GM23248 (cell line): ENCODE measurements at regions of chr2 and their contacts with region 1.

Region 1: DNA sequence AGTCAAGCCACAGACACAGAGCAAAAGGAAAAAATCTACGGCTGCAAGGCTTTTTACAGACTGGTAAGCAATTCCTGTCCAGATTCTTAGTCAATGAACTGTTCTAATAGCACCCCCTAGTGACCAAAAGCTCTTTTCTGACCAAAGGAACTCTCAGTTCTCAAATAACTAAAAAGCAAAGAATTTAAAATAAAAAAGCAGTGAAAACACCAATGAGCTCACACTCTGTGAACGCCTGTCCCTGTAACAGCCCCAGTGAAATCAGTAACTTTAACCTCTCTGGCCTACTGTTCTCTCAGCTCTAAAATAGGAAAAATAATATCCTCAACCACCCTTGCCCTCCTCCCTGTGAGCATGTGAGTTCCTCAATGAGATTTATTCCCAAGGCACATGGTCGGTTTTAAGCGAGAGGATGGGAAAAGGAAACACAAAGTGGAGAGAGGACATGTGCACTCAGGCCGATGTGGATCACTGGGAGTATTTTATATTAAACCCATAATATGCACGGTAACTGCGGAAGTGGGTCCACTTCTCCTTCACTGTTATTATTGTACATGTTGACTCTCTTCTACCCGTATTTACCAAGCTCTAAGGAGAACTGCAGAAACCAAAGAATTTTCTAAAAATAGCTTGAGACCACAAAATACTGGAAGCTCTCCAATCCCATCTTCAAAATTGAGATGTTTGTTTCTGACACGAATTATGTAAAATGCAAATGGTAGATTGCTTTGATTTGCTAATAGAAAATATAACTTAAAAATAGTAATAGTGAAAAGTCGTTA is 128.5 kb downstream of the STK39 start:
- DNase-seq: peak; percentile 82
- H3K4me3 ChIP-seq: no peak overlapping the region
- H3K27ac ChIP-seq: no peak overlapping the region
- H3K4me1 ChIP-seq: no peaks in the 10 kb centered on the region
- H3K27me3 ChIP-seq: no peaks in the 10 kb centered on the region

Region 2: DNA sequence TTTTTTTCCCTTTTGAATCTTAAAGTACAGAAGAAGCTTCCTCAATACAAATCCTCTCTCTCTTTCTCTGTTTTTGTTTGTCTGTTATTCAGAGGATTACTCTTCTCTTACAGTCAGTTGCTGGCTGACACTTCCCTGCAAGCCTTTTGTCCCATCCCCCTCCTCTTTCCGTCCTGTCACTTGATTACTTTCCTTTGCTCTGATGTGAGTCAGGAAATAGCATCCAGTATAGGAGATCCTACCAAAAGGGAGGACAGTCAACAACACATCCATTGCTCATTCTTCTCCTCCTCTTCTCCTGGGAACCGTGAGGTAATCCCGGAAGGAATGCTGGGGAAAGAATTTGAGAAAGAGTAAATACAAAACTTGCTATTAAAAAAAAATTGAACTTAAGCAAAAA is 1545.5 kb before region 1 on chr2:
- in situ Hi-C with region 1: loop called (anchors 25 kb)
- DNase-seq: peak; percentile 40
- H3K4me3 ChIP-seq: no peak overlapping the region
- H3K27ac ChIP-seq: no peak overlapping the region
- H3K4me1 ChIP-seq: no peaks in the 10 kb centered on the region
- H3K27me3 ChIP-seq: no peaks in the 10 kb centered on the region

Region 3: DNA sequence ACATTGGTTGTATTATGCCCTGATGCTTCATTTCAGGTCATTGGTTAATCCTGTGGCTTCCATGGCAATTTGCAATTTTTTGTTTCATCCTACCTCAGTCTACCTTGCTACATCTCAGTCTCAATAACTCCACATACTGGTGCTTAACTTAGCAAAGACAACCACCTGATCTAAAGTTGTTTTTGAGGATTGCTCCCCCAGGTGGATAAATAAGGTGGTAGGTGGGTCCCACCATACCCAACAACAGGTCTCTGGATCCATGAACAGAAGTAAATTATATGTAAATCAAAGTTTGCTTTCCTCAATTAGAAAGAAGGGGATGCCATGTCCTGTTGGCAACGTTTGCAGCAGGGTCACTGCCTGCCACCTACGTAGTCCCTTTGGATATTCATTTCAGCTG is 1223.7 kb before region 1 on chr2:
- in situ Hi-C with region 1: loop called (anchors 25 kb)
- DNase-seq: no peak
- H3K4me3 ChIP-seq: no peak overlapping the region
- H3K27ac ChIP-seq: no peak overlapping the region
- H3K4me1 ChIP-seq: no peaks in the 10 kb centered on the region
- H3K27me3 ChIP-seq: no peaks in the 10 kb centered on the region

Region 4: DNA sequence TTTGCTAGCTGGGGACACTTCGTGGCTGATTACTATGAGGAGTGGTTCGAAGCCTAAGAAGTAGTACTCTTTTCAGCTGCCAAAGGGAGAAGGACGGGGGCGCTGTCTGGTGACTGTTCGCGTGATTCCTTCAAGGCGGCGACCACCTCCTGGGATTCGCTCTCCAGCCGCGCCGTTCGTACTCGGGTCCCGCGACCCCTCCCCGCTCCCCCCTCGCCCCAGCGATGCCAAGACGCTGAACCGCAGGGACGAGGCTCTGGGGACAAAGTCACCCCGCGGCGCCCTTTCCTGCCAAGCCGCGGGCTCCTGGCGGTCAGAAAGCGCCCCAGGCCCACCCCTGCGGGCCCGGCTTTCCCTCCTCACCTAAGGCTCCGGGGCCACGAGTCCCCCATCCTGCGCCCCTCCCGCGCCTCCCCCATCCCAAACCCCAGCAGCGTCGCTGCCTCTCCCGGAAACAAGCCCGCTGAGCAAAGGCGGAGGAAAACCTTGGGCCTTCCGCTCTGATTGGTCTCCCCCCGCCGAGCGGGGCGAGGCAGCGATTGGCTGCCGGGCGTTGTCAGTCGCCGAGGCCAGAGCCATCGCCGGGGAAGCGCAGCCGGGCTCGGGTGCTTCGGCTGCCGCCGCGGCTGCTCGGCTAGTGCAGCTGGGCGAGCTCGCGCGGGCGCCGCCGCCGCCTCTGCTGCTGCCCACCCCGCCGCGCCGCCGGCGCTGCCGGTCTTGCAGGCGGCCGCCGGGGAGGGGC is 826.3 kb before region 1 on chr2:
- in situ Hi-C with region 1: loop called (anchors 25 kb)
- DNase-seq: peak; percentile 97
- H3K4me3 ChIP-seq: peak within 1 kb of the TSS; percentile 85
- H3K27ac ChIP-seq: no peak within 1 kb of the TSS
- H3K4me1 ChIP-seq: no peaks in the 10 kb centered on the region
- H3K27me3 ChIP-seq: peaks cover 10% of the 10 kb centered on the region; the same call in 1 of the 2 replicates

Region 5: GRCh38 chr2:167964650-167965413 is 154.1 kb before region 1 on chr2:
- in situ Hi-C with region 1: loop called (anchors 10 kb)
- DNase-seq: peak; percentile 35
- H3K4me3 ChIP-seq: no peak overlapping the region
- H3K27ac ChIP-seq: no peak overlapping the region
- H3K4me1 ChIP-seq: no peaks in the 10 kb centered on the region
- H3K27me3 ChIP-seq: no peaks in the 10 kb centered on the region

Region 6: DNA sequence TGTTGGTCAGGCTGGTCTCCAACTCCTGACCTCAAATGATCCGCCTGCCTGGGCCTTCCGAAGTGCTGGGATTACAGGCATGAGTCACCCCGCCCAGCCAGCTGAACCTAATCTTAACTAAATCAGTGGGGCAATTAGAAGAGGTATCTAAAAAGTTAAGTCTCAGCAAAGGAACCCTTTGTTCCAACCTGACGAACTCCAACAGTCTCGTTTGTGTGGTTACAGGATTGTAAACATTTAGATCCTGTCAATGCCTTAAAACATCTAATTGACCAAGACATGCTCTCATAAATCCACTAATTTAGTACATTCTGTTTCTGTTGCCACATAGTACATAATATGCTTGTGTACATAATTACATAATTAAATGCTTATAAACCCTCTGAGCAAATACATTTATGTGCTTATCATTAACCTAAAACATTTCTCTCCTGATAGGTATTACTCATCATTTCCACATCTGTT is 159.5 kb after region 1 on chr2:
- in situ Hi-C with region 1: no loop called
- DNase-seq: peak; percentile 37
- H3K4me3 ChIP-seq: no peak overlapping the region
- H3K27ac ChIP-seq: no peak overlapping the region
- H3K4me1 ChIP-seq: no peaks in the 10 kb centered on the region
- H3K27me3 ChIP-seq: peaks cover 4% of the 10 kb centered on the region; the same call in 1 of the 2 replicates

Region 7: DNA sequence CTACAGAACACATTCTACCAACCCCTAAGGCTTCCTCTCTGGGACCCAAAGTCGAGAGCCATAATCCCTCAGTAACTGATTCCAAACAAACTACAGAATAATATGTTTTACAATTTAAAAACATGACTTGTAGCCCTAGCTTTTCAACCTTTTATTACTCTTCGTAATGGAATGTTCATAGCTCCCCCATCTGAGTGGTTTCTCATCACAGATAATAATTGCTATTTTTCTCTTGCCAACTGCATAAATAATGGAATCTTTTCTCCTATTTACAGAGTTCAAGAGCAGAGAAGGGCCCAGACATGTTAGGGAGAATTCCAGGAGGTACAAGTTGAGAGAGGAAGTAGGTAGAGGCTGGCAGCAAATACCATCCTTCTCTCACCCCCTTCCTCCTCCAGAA is 277.2 kb after region 1 on chr2:
- in situ Hi-C with region 1: no loop called
- DNase-seq: peak; percentile 45
- H3K4me3 ChIP-seq: no peak overlapping the region
- H3K27ac ChIP-seq: no peak overlapping the region
- H3K4me1 ChIP-seq: peaks cover 6% of the 10 kb centered on the region; the same call in 1 of the 2 replicates
- H3K27me3 ChIP-seq: no peaks in the 10 kb centered on the region